ENCODE measurements at regions of chr1 and their contacts with region 1.

Region 1: DNA sequence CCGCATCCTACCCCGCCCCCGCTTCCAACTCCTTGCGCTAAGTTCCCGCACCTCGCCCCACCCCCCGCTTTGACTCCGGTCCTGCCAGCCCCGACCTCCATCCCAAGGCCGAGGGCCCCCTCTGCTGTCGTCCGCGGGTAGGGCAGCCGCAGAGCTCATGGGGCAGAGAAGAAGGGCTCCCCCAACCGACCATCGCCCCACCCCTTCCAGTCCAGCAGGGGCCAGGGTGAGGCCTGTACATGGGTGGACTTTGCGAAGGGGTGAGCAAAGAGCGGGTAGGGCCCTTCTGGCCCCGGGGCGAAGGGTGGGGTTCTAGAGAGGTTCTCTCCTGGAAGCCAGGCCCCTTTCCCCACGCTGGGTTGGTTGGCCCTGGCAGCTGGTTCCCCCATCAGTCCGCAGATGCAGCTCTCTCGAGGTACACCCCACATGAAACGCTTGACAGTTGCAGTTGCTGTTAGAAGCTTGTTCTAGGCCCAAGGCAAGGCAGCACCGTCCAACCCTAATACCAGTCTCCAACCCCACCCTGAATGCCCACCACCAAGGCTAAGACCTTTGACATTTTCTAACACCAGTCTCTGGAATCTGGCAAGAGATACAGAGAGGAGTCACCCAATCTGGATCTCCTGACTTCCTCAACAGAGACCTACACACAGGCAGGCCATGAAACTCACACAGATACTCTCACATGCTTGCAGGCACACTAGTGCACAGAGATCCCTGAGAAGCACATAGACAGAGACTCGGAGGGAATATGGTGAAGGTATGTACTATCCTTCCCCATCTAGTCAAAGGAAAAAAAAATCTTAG is 25.3 kb upstream of the ADGRB2 start:
- DNase-seq: peak; percentile 99
- H3K4me3 Mint-ChIP-seq: peak overlapping the region; percentile 86
- H3K27ac Mint-ChIP-seq: no peak overlapping the region
- H3K4me1 Mint-ChIP-seq: peaks cover 13% of the 10 kb centered on the region
- H3K27me3 Mint-ChIP-seq: peaks cover 2% of the 10 kb centered on the region

Region 2: DNA sequence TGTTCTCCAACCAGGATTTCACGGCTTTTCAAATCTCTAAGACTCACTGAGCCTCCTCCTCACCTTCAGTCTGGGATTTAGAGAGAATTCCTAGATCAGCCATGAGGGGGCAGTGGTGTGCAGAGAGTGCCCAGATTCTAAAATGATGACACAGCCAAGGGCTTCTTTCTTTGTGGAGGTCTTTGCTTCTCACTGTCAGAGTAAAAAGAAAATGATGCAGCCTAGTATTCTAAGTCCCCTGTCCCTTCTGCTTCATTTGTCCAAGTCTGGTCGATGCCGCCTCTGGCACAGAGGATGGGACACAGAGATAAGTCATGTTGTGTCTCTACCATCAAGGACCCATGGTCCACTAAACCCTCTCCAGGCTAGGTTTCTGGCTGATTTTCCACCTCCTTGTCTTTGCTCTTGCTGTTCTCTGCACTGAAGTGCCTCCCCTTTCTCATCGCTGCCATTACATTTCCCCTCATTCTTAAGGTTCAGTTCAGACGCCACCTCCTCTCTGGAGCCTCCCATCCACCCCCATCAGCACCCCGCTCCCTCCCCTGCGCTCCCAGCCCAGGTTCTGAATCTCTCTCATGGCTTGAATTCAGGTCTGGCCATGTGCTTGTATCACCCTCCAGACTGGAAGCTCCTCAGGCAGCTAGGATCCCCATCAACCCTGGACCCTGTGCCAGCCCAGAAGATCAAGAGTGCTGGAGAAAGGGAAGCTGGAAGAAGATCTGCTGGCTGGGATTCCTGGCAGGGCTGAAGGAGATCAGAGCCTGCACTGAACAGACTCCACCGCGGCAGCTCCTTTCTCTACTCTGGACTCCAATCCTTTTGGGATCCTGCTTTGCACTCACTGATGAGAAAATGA is 225.1 kb before region 1 on chr1:
- intact Hi-C with region 1: loop called (anchors 1 kb)
- DNase-seq: peak; percentile 87
- H3K4me3 Mint-ChIP-seq: no peak overlapping the region
- H3K27ac Mint-ChIP-seq: no peak overlapping the region
- H3K4me1 Mint-ChIP-seq: peaks cover 3% of the 10 kb centered on the region
- H3K27me3 Mint-ChIP-seq: peaks cover 10% of the 10 kb centered on the region

Region 3: DNA sequence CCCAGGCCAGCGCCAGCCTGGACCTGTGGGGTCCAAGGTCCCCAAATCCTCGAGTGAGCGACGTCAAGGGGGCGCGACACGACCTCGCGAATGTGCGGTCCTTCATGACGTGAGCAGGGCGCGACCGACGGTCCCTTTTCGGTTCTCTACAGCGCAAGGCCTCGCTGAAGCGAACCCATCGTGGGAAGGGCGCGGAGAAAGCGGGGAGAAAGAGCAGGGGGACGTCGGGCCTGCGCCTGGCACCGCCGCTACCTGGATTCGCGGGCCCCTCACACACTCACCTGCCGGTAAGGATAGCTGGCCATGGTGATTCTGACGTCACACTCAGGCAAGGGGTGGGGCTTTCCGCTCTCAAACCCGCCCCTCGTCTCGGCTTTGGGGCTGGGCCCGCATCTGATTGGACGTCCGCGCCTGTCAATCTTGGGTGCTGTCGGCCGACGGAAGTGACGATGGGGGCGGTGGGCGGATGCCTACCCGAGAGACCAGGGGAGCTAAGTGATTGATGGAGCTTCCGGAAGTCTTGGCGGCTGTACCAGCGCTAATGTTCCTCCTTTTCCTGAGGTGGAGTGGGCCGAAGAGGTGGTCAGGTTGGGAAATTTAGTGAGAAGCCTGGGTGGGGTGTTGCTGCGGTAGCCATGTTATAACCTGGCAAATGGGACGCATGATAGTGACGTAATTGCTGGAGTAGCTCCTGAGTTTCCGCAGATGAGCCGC is 144.7 kb before region 1 on chr1 and contains the start of gene PEF1:
- intact Hi-C with region 1: loop called (anchors 1 kb)
- DNase-seq: peak; percentile 100
- H3K4me3 Mint-ChIP-seq: peak within 1 kb of the TSS; percentile 97
- H3K27ac Mint-ChIP-seq: peak within 1 kb of the TSS; percentile 100
- H3K4me1 Mint-ChIP-seq: peaks cover 20% of the 10 kb centered on the region
- H3K27me3 Mint-ChIP-seq: no peaks in the 10 kb centered on the region
- total RNA-seq, gene PEF1: 64.0 and 64.4 TPM in 2 replicates

Region 4: GRCh38 chr1:31663622-31664452 is 125.6 kb before region 1 on chr1:
- intact Hi-C with region 1: loop called (anchors 1 kb)
- DNase-seq: peak; percentile 87
- H3K4me3 Mint-ChIP-seq: no peak overlapping the region
- H3K27ac Mint-ChIP-seq: no peak overlapping the region
- H3K4me1 Mint-ChIP-seq: no peaks in the 10 kb centered on the region
- H3K27me3 Mint-ChIP-seq: peaks cover 6% of the 10 kb centered on the region

Region 5: GRCh38 chr1:31762726-31763670 is 26.5 kb before region 1 on chr1:
- intact Hi-C with region 1: loop called (anchors 1 kb)
- DNase-seq: peak; percentile 90
- H3K4me3 Mint-ChIP-seq: peak overlapping the region; percentile 84
- H3K27ac Mint-ChIP-seq: no peak overlapping the region
- H3K4me1 Mint-ChIP-seq: peaks cover 18% of the 10 kb centered on the region
- H3K27me3 Mint-ChIP-seq: peaks cover 70% of the 10 kb centered on the region

Region 6: DNA sequence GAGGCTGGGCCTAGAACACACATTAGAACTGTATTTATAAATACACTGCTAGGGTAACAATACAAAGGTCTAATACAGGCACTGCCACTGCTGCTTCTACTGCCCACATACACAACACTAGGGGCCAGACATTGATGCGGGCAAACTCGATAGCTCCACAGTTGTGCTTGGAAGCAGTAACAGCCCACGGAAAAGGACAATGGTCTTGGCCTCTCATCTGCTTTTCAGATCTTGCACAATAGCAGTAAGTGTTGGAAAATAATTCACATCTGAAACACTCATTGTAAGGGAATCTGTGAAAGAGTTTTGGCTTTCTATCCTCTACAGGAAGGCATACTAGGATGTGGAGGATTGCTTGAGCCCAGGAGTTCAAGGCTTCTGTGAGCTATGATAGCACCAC is 33.3 kb after region 1 on chr1:
- intact Hi-C with region 1: no loop called
- DNase-seq: no peak
- H3K4me3 Mint-ChIP-seq: no peak overlapping the region
- H3K27ac Mint-ChIP-seq: no peak overlapping the region
- H3K4me1 Mint-ChIP-seq: peaks cover 11% of the 10 kb centered on the region
- H3K27me3 Mint-ChIP-seq: no peaks in the 10 kb centered on the region